ENCODE measurements at regions of chr18 and their contacts with region 1.

Region 1: GRCh38 chr18:76803814-76804213 is 18.5 kb upstream of the ZNF236 start:
- DNase-seq: peak; percentile 33 to 73 (median 66)
- ATAC-seq: peak; percentile 84
- H3K4me3 ChIP-seq: no peak overlapping the region
- H3K4me3 Mint-ChIP-seq: peak overlapping the region in 9 of 10 donors; percentile 27 to 71 (median 53)
- H3K27ac ChIP-seq: no peak overlapping the region
- H3K27ac Mint-ChIP-seq: peak overlapping the region in 4 of 9 donors; percentile 4 to 40 (median 4)
- H3K4me1 ChIP-seq: peaks cover 5 to 8% of the 10 kb centered on the region in 2 donors
- H3K4me1 Mint-ChIP-seq: peaks cover 6 to 13% (median 8%) of the 10 kb centered on the region in 7 donors
- H3K27me3 ChIP-seq: no peaks in the 10 kb centered on the region
- H3K27me3 Mint-ChIP-seq: peaks cover 0 to 17% (median 7%) of the 10 kb centered on the region in 5 donors

Region 2: DNA sequence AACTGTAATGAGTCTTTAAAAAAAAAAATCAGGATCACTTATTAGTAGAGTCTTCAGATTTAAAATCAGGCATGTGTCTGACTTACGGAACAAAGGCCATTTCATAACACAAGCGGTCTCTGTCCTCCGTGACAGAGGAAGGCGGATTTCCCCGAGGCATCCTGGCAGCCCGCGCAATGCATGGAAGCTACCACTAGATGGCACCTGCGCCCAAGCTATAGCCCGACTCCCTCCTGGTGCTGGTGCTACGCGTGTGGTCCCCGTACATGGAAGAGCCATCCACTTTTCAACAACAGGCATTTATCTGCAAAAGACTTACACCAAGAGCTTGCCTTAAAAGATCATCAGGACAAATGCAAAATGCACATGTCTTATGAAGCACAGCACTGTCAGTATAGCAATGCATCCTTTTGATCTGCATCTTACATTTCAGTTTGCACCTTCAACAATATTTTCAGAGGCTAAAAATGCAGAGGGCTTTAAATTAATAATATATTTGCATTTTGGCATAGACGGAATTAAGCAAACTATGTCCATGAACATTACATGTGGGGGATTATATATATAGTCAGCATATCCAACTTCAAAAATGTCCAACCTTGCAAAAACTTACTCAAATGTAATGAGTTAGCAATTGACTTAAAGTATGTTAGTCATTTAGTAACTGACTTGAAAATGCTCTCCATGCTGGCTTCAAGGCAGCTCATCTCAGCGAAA is 404.8 kb before region 1 on chr18:
- CTCF ChIA-PET with region 1: no interaction called
- POLR2A ChIA-PET with region 1: no interaction called
- intact Hi-C with region 1: loop called in 1 of 2 experiments (anchors 1 kb)
- DNase-seq: peak; percentile 47 to 78 (median 71)
- ATAC-seq: peak; percentile 93
- H3K4me3 ChIP-seq: no peak overlapping the region
- H3K4me3 Mint-ChIP-seq: peak overlapping the region in 1 of 10 donors; percentile 12
- H3K27ac ChIP-seq: no peak overlapping the region
- H3K27ac Mint-ChIP-seq: peak overlapping the region in 2 of 9 donors; percentile 41 to 73
- H3K4me1 ChIP-seq: no peaks in the 10 kb centered on the region
- H3K4me1 Mint-ChIP-seq: peaks cover 5 to 38% (median 27%) of the 10 kb centered on the region in 7 donors
- H3K27me3 ChIP-seq: no peaks in the 10 kb centered on the region
- H3K27me3 Mint-ChIP-seq: peaks cover 0 to 17% (median 0%) of the 10 kb centered on the region in 5 donors

Region 3: DNA sequence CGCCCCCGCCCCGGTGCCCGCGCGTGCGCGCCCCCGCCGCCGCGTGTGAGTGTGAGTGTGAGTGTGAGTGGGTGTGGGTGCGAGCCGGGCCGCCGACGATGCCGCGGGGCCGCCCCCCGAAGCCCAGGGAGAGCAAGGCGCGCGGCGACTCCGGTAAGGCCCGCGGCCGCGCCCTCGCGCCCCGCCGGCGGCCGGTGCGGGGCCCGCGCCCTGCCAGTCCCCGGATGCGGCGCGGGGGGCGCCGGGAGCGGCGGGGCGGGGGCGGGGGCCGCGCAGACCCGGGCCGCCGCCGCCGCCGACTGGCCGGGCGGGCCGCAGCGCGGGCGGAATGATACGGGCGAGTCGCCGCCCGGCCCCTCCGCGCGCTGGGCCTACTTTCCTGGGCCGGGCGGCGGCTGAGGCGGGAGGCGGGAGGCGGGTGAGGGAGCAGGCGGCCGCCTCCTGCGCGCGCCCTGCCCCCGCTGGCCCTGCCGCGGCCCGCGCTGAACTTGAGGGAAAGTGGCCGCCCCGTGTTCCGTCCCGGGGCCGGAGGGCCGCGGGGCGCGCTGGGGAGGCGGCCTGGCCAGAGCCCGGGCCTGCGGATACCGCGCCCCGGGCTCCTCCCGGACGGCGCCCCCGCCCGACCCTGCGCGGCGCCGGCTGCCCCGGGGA is 18.8 kb after region 1 on chr18 and contains the start of gene ZNF236:
- CTCF ChIA-PET with region 1: interaction called, 13 read pairs
- POLR2A ChIA-PET with region 1: interaction called, 3 read pairs
- intact Hi-C with region 1: loop called (anchors 1 kb)
- DNase-seq: peak; percentile 38 to 78 (median 61)
- ATAC-seq: peak; percentile 76
- H3K4me3 ChIP-seq: peak within 1 kb of the TSS; percentile 99
- H3K4me3 Mint-ChIP-seq: peak within 1 kb of the TSS; percentile 88 to 96 (median 93)
- H3K27ac ChIP-seq: peak within 1 kb of the TSS; percentile 84
- H3K27ac Mint-ChIP-seq: peak within 1 kb of the TSS; percentile 89 to 97 (median 96)
- H3K4me1 ChIP-seq: peaks cover 8 to 10% of the 10 kb centered on the region in 2 donors
- H3K4me1 Mint-ChIP-seq: peaks cover 38 to 65% (median 56%) of the 10 kb centered on the region in 7 donors
- H3K27me3 ChIP-seq: no peaks in the 10 kb centered on the region
- H3K27me3 Mint-ChIP-seq: no peaks in the 10 kb centered on the region
- total RNA-seq, gene ZNF236: 25.9 to 34.5 (median 30.6) TPM

Region 4: DNA sequence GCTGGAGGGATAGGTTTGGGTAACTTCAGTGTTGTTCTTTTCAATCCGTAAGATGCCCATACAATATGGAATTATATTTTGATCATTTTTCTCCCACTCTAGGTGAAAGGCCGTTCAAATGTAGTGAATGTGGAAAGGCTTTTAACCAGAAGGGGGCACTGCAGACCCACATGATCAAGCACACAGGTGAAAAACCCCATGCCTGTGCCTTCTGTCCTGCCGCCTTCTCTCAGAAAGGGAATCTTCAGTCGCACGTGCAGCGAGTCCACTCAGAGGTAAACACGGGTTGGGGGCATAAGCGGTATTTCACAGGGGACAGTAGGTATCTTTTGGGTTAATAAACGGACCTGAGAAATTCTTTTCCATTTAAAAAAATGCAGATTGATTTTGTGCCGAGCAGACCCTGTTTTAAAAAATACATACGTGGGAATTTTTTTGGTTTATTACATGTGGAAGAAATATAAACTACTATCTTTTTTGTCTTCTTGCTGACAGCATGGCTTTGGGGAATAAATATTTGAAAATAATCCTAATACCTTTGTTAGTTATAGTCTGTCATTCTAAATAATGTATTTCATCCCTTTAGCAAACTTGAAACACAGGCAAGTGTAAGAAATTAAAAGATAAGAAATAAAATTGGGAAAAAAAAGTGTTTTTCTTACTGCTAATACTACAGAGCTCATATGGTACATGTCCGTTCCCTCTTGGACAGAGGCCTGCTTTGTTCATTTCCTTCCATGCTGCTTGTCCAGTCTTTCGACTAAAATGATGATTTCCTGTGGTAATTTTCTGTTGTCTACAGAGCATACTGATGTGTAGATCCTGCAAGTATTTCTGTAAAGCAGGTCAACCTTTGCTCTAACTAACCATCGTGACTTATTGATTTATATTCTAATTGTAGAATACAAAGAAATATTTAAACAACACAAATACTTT is 71.8 kb after region 1 on chr18:
- CTCF ChIA-PET with region 1: interaction called, 6 read pairs
- POLR2A ChIA-PET with region 1: no interaction called
- intact Hi-C with region 1: loop called in 1 of 2 experiments (anchors 1 kb)
- DNase-seq: peak in 5 of 9 donors; percentile 20 to 35 (median 28)
- ATAC-seq: peak; percentile 65
- H3K4me3 ChIP-seq: no peak overlapping the region
- H3K4me3 Mint-ChIP-seq: no peak overlapping the region
- H3K27ac ChIP-seq: no peak overlapping the region
- H3K27ac Mint-ChIP-seq: peak overlapping the region in 1 of 9 donors; percentile 5
- H3K4me1 ChIP-seq: no peaks in the 10 kb centered on the region
- H3K4me1 Mint-ChIP-seq: peaks cover 0 to 14% (median 5%) of the 10 kb centered on the region in 7 donors
- H3K27me3 ChIP-seq: no peaks in the 10 kb centered on the region
- H3K27me3 Mint-ChIP-seq: no peaks in the 10 kb centered on the region

Region 5: GRCh38 chr18:76953583-76954233 is 149.9 kb after region 1 on chr18:
- CTCF ChIA-PET with region 1: no interaction called
- POLR2A ChIA-PET with region 1: no interaction called
- intact Hi-C with region 1: no loop called
- DNase-seq: no peak
- ATAC-seq: no peak
- H3K4me3 ChIP-seq: no peak overlapping the region
- H3K4me3 Mint-ChIP-seq: no peak overlapping the region
- H3K27ac ChIP-seq: no peak overlapping the region
- H3K27ac Mint-ChIP-seq: peak overlapping the region in 1 of 9 donors; percentile 62
- H3K4me1 ChIP-seq: no peaks in the 10 kb centered on the region
- H3K4me1 Mint-ChIP-seq: peaks cover under 1 to 29% (median 3%) of the 10 kb centered on the region in 7 donors
- H3K27me3 ChIP-seq: no peaks in the 10 kb centered on the region
- H3K27me3 Mint-ChIP-seq: no peaks in the 10 kb centered on the region

Region 6: GRCh38 chr18:76982841-76983587 is 179.2 kb after region 1 on chr18:
- CTCF ChIA-PET with region 1: interaction called, 18 read pairs
- POLR2A ChIA-PET with region 1: interaction called, 5 read pairs
- intact Hi-C with region 1: loop called (anchors 1 kb)
- DNase-seq: peak; percentile 62 to 87 (median 81)
- ATAC-seq: peak; percentile 98
- H3K4me3 ChIP-seq: no peak overlapping the region
- H3K4me3 Mint-ChIP-seq: peak overlapping the region in 3 of 10 donors; percentile 27 to 53 (median 40)
- H3K27ac ChIP-seq: no peak overlapping the region
- H3K27ac Mint-ChIP-seq: peak overlapping the region in 2 of 9 donors; percentile 4 to 51
- H3K4me1 ChIP-seq: peaks cover 0 to 7% of the 10 kb centered on the region in 2 donors
- H3K4me1 Mint-ChIP-seq: peaks cover 0 to 8% (median 6%) of the 10 kb centered on the region in 7 donors
- H3K27me3 ChIP-seq: no peaks in the 10 kb centered on the region
- H3K27me3 Mint-ChIP-seq: no peaks in the 10 kb centered on the region